ENCODE measurements at regions of chr13 and their contacts with region 1.

Region 1: DNA sequence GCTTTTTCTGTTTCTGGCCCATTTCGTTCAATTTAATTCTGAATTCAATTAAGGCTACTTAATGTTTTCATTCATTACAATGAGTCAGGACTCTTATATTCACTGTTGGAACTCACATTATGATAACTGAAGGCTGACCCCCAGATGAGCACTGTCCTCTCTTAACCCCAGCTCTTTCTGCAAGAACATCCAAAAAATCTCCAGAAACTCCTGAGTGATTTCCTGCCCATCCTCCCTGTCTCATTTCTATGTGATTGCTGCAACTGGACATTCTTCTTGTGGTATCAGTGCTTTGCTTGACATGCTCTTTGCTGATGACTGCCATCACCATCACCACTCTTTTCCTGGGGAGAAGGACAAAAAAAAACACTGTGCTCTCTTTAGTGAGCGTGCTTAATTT is 240.3 kb downstream of the SPRY2 start:
- DNase-seq: no peak
- H3K4me3 ChIP-seq: no peak overlapping the region
- H3K27ac ChIP-seq: no peak overlapping the region
- H3K4me1 ChIP-seq: no peaks in the 10 kb centered on the region
- H3K27me3 ChIP-seq: no peaks in the 10 kb centered on the region
- CTCF ChIP-seq: no peak
- POLR2A ChIP-seq: no peak

Region 2: GRCh38 chr13:79519255-79519654 is 581.4 kb before region 1 on chr13:
- intact Hi-C with region 1: loop called (anchors 5 kb)
- DNase-seq: no peak
- H3K4me3 ChIP-seq: no peak overlapping the region
- H3K27ac ChIP-seq: no peak overlapping the region
- H3K4me1 ChIP-seq: no peaks in the 10 kb centered on the region
- H3K27me3 ChIP-seq: no peaks in the 10 kb centered on the region
- CTCF ChIP-seq: no peak
- POLR2A ChIP-seq: no peak

Measured in breast epithelium (tissue), 4 donors.